ENCODE measurements at regions of chr4 and their contacts with region 1.

Region 1: GRCh38 chr4:165464813-165465381 is 86.1 kb downstream of the CPE start:
- DNase-seq: peak; percentile 52
- H3K4me3 ChIP-seq: no peak overlapping the region
- H3K27ac ChIP-seq: no peak overlapping the region
- H3K4me1 ChIP-seq: no peaks in the 10 kb centered on the region
- H3K27me3 ChIP-seq: no peaks in the 10 kb centered on the region
- CTCF ChIP-seq: peak; percentile 54 to 61
- POLR2A ChIP-seq: no peak

Region 2: GRCh38 chr4:164768516-164768915 is 696.4 kb before region 1 on chr4:
- CTCF ChIA-PET with region 1: no interaction called
- POLR2A ChIA-PET with region 1: no interaction called
- dilution Hi-C with region 1: no loop called
- intact Hi-C with region 1: no loop called
- DNase-seq: no peak
- H3K4me3 ChIP-seq: no peak overlapping the region
- H3K27ac ChIP-seq: no peak overlapping the region
- H3K4me1 ChIP-seq: no peaks in the 10 kb centered on the region
- H3K27me3 ChIP-seq: no peaks in the 10 kb centered on the region
- CTCF ChIP-seq: peak in 1 of 2 donors; percentile 7
- POLR2A ChIP-seq: no peak

Region 3: DNA sequence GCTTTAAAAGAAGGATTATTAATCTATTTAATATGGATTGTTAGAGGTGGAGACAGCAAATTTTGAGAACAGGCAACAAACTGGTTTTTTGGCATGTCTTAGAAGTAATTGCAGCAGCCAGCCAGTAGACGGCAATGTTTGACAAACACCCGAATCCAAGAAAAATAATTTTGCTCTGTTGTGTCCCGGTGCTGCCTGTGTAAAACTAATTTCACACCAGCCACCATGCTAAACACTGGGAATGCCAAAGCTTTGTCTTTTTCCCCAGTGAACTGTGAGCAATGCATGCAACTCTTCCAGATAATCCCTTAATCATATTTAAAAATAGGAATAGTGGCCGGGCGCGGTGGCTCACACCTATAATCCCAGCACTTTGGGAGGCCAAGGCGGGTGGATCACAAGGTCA is 685.1 kb before region 1 on chr4:
- CTCF ChIA-PET with region 1: no interaction called
- POLR2A ChIA-PET with region 1: no interaction called
- dilution Hi-C with region 1: no loop called
- intact Hi-C with region 1: loop called (anchors 1 kb)
- DNase-seq: peak; percentile 26
- H3K4me3 ChIP-seq: no peak overlapping the region
- H3K27ac ChIP-seq: no peak overlapping the region
- H3K4me1 ChIP-seq: no peaks in the 10 kb centered on the region
- H3K27me3 ChIP-seq: no peaks in the 10 kb centered on the region
- CTCF ChIP-seq: peak; percentile 58 to 78
- POLR2A ChIP-seq: no peak

Region 4: GRCh38 chr4:165403637-165404036 is 61.3 kb before region 1 on chr4:
- CTCF ChIA-PET with region 1: no interaction called
- POLR2A ChIA-PET with region 1: no interaction called
- dilution Hi-C with region 1: no loop called
- intact Hi-C with region 1: no loop called
- DNase-seq: no peak
- H3K4me3 ChIP-seq: no peak overlapping the region
- H3K27ac ChIP-seq: no peak overlapping the region
- H3K4me1 ChIP-seq: no peaks in the 10 kb centered on the region
- H3K27me3 ChIP-seq: no peaks in the 10 kb centered on the region
- CTCF ChIP-seq: no peak
- POLR2A ChIP-seq: no peak